GM12878 (cell line): ENCODE measurements at regions of chr10 and their contacts with region 1.

Region 1: DNA sequence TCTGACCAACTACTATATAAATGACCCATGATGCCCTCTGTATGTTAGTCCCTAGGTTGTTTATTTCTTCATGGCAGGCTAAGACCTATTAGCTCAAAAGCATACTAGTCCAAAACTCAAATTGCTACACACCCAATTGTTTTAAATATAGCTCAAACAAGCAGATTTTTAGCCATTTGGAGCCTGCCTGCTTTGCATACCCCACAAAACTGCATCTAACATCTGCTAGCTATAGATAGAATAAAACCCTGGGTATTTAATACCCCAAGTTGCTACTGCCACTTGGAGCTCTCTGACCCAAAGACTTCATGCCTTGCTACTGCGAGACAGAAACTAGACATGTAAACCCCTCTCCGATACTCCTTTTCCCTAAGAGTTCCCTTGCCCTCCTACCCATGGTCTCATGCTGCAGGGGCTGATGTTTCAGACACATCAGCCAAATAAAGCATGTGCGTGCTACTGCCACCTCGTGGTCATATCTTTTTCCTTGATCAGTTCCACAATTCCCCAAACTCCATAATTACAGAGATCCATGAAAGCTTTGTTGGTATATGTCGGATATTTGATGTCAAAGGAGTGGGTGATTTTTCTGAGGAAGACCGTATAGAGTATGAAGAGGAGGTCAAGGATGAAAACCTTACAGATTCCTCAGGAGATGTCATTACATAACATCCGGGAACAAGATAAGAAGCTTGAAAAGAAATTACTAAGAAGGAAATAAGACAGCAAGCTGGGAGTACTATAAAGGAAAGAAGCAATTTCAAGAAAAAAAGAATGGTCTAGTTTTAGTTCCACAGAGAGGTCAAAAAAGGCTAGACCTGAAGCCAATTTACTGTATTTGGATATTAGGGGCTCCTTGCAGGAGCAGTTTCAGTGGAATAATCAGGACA is 386.6 kb downstream of the SH2D4B start:
- DNase-seq: no peak
- ATAC-seq: peak; percentile 81
- H3K4me3 ChIP-seq: no peak overlapping the region
- H3K27ac ChIP-seq: no peak overlapping the region
- H3K4me1 ChIP-seq: no peaks in the 10 kb centered on the region
- H3K27me3 ChIP-seq: no peaks in the 10 kb centered on the region
- CTCF ChIP-seq: peak; percentile 55 to 69 (median 60)
- EP300 ChIP-seq: no peak
- POLR2A ChIP-seq: no peak
- RAD21 ChIP-seq: peak; percentile 57

Region 2: DNA sequence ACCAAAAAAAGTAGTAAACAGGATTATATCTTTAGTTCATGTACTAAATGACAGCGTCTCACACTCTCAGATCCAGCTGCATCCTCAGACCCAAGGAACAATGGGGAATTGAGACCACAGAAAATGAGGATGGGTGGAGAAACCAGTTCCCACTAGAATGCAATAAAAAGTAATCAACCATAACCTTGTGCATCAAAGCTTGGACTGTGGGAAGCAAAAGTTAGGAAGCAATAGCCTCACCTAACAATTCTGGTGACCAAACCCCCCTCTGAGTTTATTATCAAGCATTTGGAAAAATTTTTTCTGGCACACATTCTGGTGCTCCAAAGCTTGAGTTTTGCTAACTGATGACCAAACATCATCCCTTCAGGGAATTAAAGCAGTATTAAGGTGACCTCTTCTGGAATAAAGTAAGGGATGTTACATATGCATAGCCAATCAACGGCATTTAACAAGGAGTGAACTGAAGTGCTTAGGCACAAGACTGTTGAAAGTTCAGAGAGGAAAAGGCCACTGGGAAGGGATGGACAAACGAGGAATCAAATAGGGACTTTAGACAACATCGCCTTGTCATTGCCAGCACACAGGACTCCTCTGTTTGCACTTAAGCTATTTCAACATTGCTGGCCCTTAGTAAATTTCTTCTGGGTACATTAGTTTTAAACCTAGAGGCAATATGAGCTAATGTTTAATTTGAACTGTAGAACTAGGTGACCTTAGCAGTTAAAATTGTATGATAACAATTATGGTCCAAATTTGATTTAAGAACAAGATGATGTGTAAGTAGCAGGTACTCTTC is 633.6 kb before region 1 on chr10:
- CTCF ChIA-PET with region 1: no interaction called
- POLR2A ChIA-PET with region 1: no interaction called
- RAD21 ChIA-PET with region 1: no interaction called
- SMC1A ChIA-PET with region 1: no interaction called
- in situ Hi-C with region 1: no loop called
- intact Hi-C with region 1: no loop called
- DNase-seq: no peak
- ATAC-seq: no peak
- H3K4me3 ChIP-seq: no peak overlapping the region
- H3K27ac ChIP-seq: no peak overlapping the region
- H3K4me1 ChIP-seq: no peaks in the 10 kb centered on the region
- H3K27me3 ChIP-seq: peaks cover 0 to 6% of the 10 kb centered on the region in 2 experiments; a peak in 2 of 4 replicates
- CTCF ChIP-seq: no peak
- EP300 ChIP-seq: no peak
- POLR2A ChIP-seq: no peak
- RAD21 ChIP-seq: no peak

Region 3: DNA sequence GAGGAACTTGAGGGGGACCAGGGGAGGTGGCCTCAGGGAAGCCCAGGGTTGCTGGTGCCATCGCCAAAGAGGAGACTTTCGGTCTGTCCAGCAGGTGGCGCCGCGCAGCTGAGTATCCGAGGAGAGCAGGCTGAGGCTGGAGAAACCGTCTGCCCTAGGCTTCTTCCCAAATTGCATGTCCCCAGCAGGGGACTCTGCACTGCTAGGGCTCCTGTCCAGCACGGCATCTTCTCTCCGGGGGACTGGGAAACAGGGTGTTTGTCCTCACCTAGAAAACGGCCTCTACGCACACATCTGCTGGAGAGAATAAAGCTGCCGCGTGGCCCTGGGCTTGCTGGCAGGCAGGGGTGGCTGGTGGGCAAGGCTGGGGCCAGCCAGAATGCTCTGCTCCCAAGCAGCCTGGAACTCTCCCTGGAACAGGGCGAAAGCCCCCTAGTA is 224.7 kb before region 1 on chr10:
- CTCF ChIA-PET with region 1: interaction called, 49 read pairs
- POLR2A ChIA-PET with region 1: no interaction called
- RAD21 ChIA-PET with region 1: interaction called, 10 read pairs
- SMC1A ChIA-PET with region 1: interaction called, 22 read pairs
- in situ Hi-C with region 1: loop called (anchors 5 kb)
- intact Hi-C with region 1: loop called (anchors 1 kb)
- DNase-seq: no peak
- ATAC-seq: peak; percentile 96
- H3K4me3 ChIP-seq: no peak overlapping the region
- H3K27ac ChIP-seq: no peak overlapping the region
- H3K4me1 ChIP-seq: no peaks in the 10 kb centered on the region; the same call in 1 of the 2 replicates
- H3K27me3 ChIP-seq: no peaks in the 10 kb centered on the region
- CTCF ChIP-seq: peak; percentile 88 to 92 (median 90)
- EP300 ChIP-seq: no peak
- POLR2A ChIP-seq: no peak
- RAD21 ChIP-seq: peak; percentile 88

Region 4: DNA sequence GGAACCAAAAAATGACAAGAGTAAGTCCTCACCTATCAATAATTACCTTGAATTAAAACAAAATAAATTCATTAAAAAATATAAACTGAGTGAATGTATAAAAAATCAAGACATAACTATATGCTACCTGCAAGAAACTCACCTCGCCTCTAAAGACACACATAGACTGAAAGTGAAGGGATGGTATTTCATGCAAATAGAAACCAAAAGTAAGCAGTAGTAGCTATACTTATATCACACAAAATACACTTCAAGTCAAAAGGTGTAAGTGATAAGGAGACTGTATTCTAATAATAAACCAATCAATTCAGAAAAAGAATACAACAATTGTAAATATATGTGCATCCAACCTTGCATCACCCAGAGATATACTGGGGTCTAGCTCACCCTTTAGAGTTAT is 54.0 kb before region 1 on chr10:
- CTCF ChIA-PET with region 1: interaction called, 3 read pairs
- POLR2A ChIA-PET with region 1: no interaction called
- RAD21 ChIA-PET with region 1: interaction called, 9 read pairs
- SMC1A ChIA-PET with region 1: interaction called, 14 read pairs
- in situ Hi-C with region 1: no loop called
- intact Hi-C with region 1: no loop called
- DNase-seq: peak; percentile 13
- ATAC-seq: peak; percentile 96
- H3K4me3 ChIP-seq: peak overlapping the region; percentile 28; the same call in 1 of the 2 replicates
- H3K27ac ChIP-seq: peak overlapping the region; percentile 6; the same call in 1 of the 2 replicates
- H3K4me1 ChIP-seq: peaks cover 6% of the 10 kb centered on the region
- H3K27me3 ChIP-seq: no peaks in the 10 kb centered on the region
- CTCF ChIP-seq: no peak
- EP300 ChIP-seq: no peak
- POLR2A ChIP-seq: no peak
- RAD21 ChIP-seq: no peak

Region 5: GRCh38 chr10:80938903-80939302 is 14.6 kb after region 1 on chr10:
- CTCF ChIA-PET with region 1: interaction called, 9 read pairs
- POLR2A ChIA-PET with region 1: no interaction called
- RAD21 ChIA-PET with region 1: interaction called, 6 read pairs
- SMC1A ChIA-PET with region 1: interaction called, 13 read pairs
- in situ Hi-C with region 1: no loop called
- intact Hi-C with region 1: no loop called
- DNase-seq: no peak
- ATAC-seq: peak; percentile 45; the same call in 2 of the 3 replicates
- H3K4me3 ChIP-seq: no peak overlapping the region
- H3K27ac ChIP-seq: no peak overlapping the region
- H3K4me1 ChIP-seq: no peaks in the 10 kb centered on the region
- H3K27me3 ChIP-seq: no peaks in the 10 kb centered on the region
- CTCF ChIP-seq: no peak
- EP300 ChIP-seq: no peak
- POLR2A ChIP-seq: no peak
- RAD21 ChIP-seq: no peak